Spleen (tissue), 13 donors: ENCODE measurements at regions of chr10 and their contacts with region 1.

Region 1: DNA sequence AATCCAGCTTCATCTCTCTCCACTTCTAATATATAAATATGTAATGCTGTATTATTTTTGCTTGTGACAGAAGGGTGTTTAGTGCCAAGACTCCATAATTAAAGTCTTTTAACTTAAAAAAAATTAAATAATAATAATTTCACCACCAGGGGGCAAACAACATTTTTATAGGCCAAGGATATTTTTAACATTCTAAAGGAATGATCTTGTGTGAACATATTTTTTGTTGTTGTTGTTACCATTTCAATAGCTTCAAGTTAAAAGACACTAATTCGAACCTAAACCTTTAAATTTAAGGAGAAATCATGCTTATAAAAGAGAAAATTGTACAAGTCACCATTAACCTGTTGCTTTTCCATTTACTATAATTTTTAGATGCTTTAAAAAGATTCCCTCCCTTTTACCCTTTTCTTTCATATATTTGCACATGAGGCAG is 7.5 kb upstream of the DNAJC1 start:
- DNase-seq: no peak
- H3K4me3 ChIP-seq: no peak overlapping the region
- H3K27ac ChIP-seq: no peak overlapping the region
- H3K4me1 ChIP-seq: peaks cover 0 to 7% (median 2%) of the 10 kb centered on the region in 6 donors
- H3K27me3 ChIP-seq: no peaks in the 10 kb centered on the region
- CTCF ChIP-seq: peak in 6 of 11 experiments; percentile 16 to 64 (median 33)
- POLR2A ChIP-seq: no peak

Region 2: DNA sequence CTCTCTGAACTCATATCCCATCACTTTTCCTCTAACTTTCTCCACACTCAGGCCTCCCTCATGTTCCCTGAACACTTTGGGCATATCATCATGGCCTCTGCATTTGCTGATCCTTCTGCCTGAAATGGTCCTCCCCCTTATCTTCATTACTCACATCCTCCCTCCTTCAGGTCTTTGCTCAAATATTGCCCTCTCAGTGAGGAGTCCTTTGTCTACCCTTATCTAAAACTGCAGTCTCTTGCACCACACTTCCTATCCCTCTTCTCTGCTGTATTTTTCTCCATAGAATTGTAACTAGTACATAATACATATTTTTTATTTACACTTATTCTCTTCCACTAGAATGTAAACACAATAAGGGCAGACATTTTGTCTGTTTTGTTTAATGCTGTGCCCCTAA is 49.1 kb before region 1 on chr10:
- intact Hi-C with region 1: no loop called
- DNase-seq: no peak
- H3K4me3 ChIP-seq: no peak overlapping the region
- H3K27ac ChIP-seq: no peak overlapping the region
- H3K4me1 ChIP-seq: peaks cover 0 to 3% (median 0%) of the 10 kb centered on the region in 6 donors
- H3K27me3 ChIP-seq: no peaks in the 10 kb centered on the region
- CTCF ChIP-seq: no peak
- POLR2A ChIP-seq: no peak

Region 3: GRCh38 chr10:22228943-22229801 is 218.2 kb after region 1 on chr10:
- intact Hi-C with region 1: loop called (anchors 5 kb)
- DNase-seq: peak; percentile 94
- H3K4me3 ChIP-seq: peak overlapping the region; percentile 56 to 85 (median 62)
- H3K27ac ChIP-seq: peak overlapping the region; percentile 89 to 95 (median 92)
- H3K4me1 ChIP-seq: peaks cover 0 to 33% (median 12%) of the 10 kb centered on the region in 6 donors
- H3K27me3 ChIP-seq: peaks cover 0 to 13% (median 0%) of the 10 kb centered on the region in 7 donors
- CTCF ChIP-seq: no peak
- POLR2A ChIP-seq: no peak